ENCODE measurements at regions of chr4 and their contacts with region 1.

Region 1: DNA sequence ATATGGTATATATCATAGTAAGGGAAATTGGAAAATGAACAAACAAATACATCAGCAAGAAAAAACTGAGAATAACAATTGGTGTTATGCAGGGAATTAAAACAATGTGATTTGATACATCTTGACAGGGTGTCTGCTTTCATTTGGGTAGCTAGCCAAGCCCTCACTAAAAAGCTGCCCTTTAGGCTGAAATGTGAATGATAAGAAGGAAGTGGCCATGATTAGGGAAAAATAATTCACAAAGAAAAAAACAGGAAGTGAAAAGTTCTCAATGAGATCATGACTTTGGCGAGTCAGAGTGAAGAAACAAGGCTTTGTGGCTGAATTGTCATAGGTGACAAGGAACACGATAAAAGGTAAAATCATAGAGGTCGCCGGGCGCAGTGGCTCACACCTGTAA is 675.8 kb upstream of the SLIT2 start:
- DNase-seq: no peak
- H3K4me3 ChIP-seq: no peak overlapping the region
- H3K27ac ChIP-seq: no peak overlapping the region
- H3K4me1 ChIP-seq: no peaks in the 10 kb centered on the region
- H3K27me3 ChIP-seq: no peaks in the 10 kb centered on the region
- CTCF ChIP-seq: no peak
- POLR2A ChIP-seq: no peak

Region 2: GRCh38 chr4:19857380-19857779 is 281.5 kb after region 1 on chr4:
- intact Hi-C with region 1: loop called (anchors 5 kb)
- DNase-seq: no peak
- H3K4me3 ChIP-seq: no peak overlapping the region
- H3K27ac ChIP-seq: no peak overlapping the region
- H3K4me1 ChIP-seq: no peaks in the 10 kb centered on the region
- H3K27me3 ChIP-seq: no peaks in the 10 kb centered on the region
- CTCF ChIP-seq: no peak
- POLR2A ChIP-seq: no peak

Measured in breast epithelium (tissue), 4 donors.